ENCODE measurements at regions of chr2 and their contacts with region 1.

Region 1: GRCh38 chr2:167212014-167212648 is 323.9 kb downstream of the XIRP2 start:
- DNase-seq: peak; percentile 71
- H3K4me3 Mint-ChIP-seq: no peak overlapping the region
- H3K27ac Mint-ChIP-seq: no peak overlapping the region
- H3K4me1 Mint-ChIP-seq: no peaks in the 10 kb centered on the region
- H3K27me3 Mint-ChIP-seq: no peaks in the 10 kb centered on the region

Region 2: DNA sequence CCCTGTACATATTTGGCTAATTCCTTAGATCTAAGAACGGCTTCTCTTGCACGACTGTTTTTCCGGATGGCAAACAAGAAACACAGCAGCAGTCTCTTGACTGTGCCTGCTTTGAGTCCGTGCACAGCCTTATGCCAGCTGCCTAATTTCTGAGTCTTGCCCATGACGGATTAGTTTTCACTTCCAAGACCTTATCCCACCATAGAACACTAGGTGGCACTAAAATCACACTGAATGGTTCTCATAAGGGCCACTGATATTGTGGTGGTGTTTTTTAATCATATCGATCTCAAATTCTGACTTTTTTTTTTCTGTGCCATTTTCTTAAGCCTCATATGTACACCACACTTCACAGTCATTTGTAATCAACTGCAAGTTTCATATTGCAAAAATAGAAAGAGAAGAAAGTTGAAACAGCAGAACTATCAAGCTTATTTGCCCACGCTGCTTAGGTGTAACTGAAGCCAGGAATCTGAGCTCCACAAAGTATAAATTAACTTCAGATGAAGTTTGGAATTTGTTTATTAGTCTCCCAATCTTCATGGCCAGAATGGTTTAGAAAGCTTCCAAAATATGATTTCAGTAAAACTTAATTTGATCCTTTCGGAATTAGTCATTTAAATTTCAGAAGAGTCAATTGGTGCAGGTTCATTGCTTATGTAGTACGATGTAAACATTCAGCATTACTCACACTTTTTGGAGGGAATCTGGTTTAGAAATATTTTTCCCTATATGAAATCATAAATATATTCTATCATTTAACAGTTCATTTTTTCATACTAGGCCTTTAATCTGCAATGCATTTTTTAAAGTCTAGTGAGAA is 672.6 kb before region 1 on chr2:
- intact Hi-C with region 1: loop called (anchors 1 kb)
- DNase-seq: peak; percentile 77
- H3K4me3 Mint-ChIP-seq: no peak overlapping the region
- H3K27ac Mint-ChIP-seq: no peak overlapping the region
- H3K4me1 Mint-ChIP-seq: no peaks in the 10 kb centered on the region
- H3K27me3 Mint-ChIP-seq: no peaks in the 10 kb centered on the region

Region 3: DNA sequence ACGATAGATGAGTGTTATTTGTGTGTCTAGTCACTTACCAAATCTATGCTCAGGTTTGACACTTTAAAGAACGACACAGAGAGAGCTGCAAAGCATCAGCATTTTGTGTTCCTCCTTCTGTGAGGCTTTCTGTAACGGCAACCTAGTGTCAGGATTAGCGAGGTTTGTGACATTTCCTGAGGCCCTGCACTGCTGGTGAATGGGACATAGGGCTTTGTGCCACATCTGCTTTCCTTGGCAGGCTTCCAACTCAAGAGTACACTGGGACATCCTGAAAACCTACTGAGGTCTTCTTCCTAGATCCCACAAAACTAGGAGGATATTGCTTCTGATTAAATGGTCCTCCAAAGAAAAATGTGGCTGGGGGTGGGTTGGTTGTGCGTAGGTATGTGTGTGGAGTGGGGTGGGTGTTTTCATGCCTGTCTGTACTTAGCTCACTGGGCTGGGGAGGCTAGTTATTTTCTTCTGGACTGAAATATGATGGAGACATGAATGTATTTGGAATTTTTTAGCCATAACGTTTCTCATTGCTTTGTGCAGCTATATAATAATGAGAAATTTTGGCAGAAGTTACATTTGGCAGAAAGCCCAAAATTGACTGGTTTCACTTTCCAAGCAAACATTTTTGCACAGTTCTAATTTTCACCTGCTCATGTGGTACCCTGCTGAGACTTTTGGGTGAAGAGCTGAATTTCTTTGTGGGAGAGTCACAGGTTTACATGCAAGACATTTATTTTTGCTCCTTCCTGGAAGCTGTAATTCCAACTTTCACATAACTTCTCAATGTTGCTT is 15.5 kb before region 1 on chr2:
- intact Hi-C with region 1: no loop called
- DNase-seq: no peak
- H3K4me3 Mint-ChIP-seq: no peak overlapping the region
- H3K27ac Mint-ChIP-seq: no peak overlapping the region
- H3K4me1 Mint-ChIP-seq: no peaks in the 10 kb centered on the region
- H3K27me3 Mint-ChIP-seq: no peaks in the 10 kb centered on the region

Region 4: DNA sequence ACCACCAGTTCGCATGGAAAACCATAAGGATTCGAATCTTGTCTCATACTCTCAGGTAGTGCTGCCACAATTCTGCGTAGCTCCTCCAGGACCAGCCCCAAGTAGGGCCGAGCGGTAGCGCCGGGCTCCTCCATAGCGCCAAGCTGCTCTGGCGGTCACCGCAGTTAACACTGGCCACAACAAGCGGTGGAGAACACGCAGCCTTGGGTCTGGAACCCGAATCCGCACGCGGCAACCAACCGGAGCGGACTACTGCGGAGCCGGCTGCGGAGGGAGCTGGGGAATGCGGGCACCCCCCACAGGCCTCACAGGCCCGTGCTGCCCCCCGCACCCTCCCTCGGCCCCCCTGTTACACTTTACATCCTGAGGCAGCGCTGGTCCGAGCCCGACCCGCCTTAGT is 503.8 kb after region 1 on chr2:
- intact Hi-C with region 1: no loop called
- DNase-seq: no peak
- H3K4me3 Mint-ChIP-seq: no peak overlapping the region
- H3K27ac Mint-ChIP-seq: no peak overlapping the region
- H3K4me1 Mint-ChIP-seq: no peaks in the 10 kb centered on the region
- H3K27me3 Mint-ChIP-seq: no peaks in the 10 kb centered on the region

Measured in activated CD4-positive, alpha-beta T cell treated with anti-CD3 and anti-CD28 coated beads, Interleukin-2, amount 10 ng/mL, durations not matched to agents 24 days and 14 days (primary cell).